ENCODE measurements at regions of chr17 and their contacts with region 1.

Region 1: GRCh38 chr17:4903051-4903818 is at the start of gene CHRNE:
- DNase-seq: peak; percentile 85 to 87
- H3K4me3 ChIP-seq: no peak within 1 kb of the TSS
- H3K27ac ChIP-seq: peak within 1 kb of the TSS in 2 of 3 donors; percentile 14 to 56
- H3K4me1 ChIP-seq: peaks cover 12 to 30% of the 10 kb centered on the region in 2 donors
- H3K27me3 ChIP-seq: peaks cover 8% of the 10 kb centered on the region
- CTCF ChIP-seq: peak; percentile 57 to 85 (median 68)
- POLR2A ChIP-seq: no peak
- total RNA-seq, gene CHRNE: 0.29 to 0.83 (median 0.49) TPM

Region 2: DNA sequence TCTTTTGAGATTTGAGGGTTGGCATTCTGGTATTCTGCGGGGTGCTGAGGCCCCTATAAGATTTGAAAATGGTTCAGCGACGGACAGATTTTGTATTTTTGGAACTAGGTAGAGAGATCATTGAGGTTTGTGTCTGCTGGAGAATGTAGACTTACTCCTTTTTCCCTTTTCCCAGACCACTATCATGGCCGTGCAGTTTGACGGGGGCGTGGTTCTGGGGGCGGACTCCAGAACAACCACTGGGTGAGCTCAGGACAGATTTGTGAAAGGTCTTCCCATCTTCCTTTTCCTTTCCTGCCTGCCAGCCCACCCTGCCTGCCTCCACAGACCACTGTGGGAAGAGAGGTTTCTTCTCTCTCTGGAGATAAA is 106.7 kb before region 1 on chr17:
- intact Hi-C with region 1: no loop called
- DNase-seq: peak; percentile 11 to 27
- H3K4me3 ChIP-seq: peak overlapping the region; percentile 37 to 88 (median 81)
- H3K27ac ChIP-seq: peak overlapping the region in 2 of 3 donors; percentile 37 to 77
- H3K4me1 ChIP-seq: peaks cover 7 to 8% of the 10 kb centered on the region in 2 donors
- H3K27me3 ChIP-seq: no peaks in the 10 kb centered on the region
- CTCF ChIP-seq: no peak
- POLR2A ChIP-seq: no peak

Region 3: GRCh38 chr17:4986951-4987766 is 83.9 kb after region 1 on chr17 and contains the start of gene CAMTA2:
- intact Hi-C with region 1: loop called (anchors 2 kb)
- DNase-seq: peak; percentile 88 to 90
- H3K4me3 ChIP-seq: peak within 1 kb of the TSS; percentile 21 to 94 (median 80)
- H3K27ac ChIP-seq: peak within 1 kb of the TSS; percentile 71 to 94 (median 93)
- H3K4me1 ChIP-seq: peaks cover 17 to 19% of the 10 kb centered on the region in 2 donors
- H3K27me3 ChIP-seq: no peaks in the 10 kb centered on the region
- CTCF ChIP-seq: peak in 5 of 6 experiments; percentile 47 to 75 (median 69)
- POLR2A ChIP-seq: peak in 1 of 2 donors; percentile 88
- total RNA-seq, gene CAMTA2: 17.1 to 29.0 (median 20.4) TPM

Region 4: GRCh38 chr17:4997302-4998026 is 94.2 kb after region 1 on chr17 and contains the starts of genes INCA1 and KIF1C:
- intact Hi-C with region 1: no loop called
- DNase-seq: peak; percentile 95 to 97
- H3K4me3 ChIP-seq: peak within 1 kb of the TSS; percentile 91 to 99 (median 93)
- H3K27ac ChIP-seq: peak within 1 kb of the TSS; percentile 89 to 99 (median 98)
- H3K4me1 ChIP-seq: peaks cover 21 to 26% of the 10 kb centered on the region in 2 donors
- H3K27me3 ChIP-seq: no peaks in the 10 kb centered on the region
- CTCF ChIP-seq: peak in 3 of 6 experiments; percentile 20 to 42 (median 28)
- POLR2A ChIP-seq: peak in 1 of 2 donors; percentile 93
- total RNA-seq, gene INCA1: 1.0 to 2.3 (median 1.4) TPM
- total RNA-seq, gene KIF1C: 67.3 to 134 (median 86.9) TPM

Measured in thyroid gland (tissue), 4 donors.